Head of caudate nucleus (tissue), 42 donors: ENCODE measurements at regions of chr16 and their contacts with region 1.

Region 1: GRCh38 chr16:15523092-15523541 is 88.7 kb downstream of the BMERB1 start:
- DNase-seq: peak; percentile 27 to 87 (median 64)

Region 2: DNA sequence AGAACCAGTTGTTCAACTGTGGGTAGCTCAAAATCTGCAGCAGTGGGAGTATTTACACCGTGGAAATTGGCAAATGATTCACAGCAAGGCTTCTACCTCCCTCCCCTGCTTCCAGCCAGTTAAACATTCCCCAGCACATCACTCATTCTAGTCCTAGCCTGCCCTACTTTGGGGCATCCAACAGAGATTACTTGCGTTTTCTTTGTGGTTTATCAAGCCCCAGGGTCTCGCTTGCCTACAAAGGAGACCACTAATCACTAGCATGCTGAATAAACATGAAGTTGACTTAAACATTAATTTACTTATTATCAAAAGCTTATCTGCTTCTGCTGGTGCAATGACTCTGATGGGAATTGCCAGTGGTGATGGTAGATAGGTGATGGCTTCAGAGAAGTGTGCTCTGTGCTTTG is 25.4 kb after region 1 on chr16:
- intact Hi-C with region 1: loop called (anchors 2 kb)
- DNase-seq: peak in 7 of 42 donors; percentile 13 to 39 (median 26)